IMR-90 (cell line): ENCODE measurements at regions of chr1 and their contacts with region 1.

Region 1: DNA sequence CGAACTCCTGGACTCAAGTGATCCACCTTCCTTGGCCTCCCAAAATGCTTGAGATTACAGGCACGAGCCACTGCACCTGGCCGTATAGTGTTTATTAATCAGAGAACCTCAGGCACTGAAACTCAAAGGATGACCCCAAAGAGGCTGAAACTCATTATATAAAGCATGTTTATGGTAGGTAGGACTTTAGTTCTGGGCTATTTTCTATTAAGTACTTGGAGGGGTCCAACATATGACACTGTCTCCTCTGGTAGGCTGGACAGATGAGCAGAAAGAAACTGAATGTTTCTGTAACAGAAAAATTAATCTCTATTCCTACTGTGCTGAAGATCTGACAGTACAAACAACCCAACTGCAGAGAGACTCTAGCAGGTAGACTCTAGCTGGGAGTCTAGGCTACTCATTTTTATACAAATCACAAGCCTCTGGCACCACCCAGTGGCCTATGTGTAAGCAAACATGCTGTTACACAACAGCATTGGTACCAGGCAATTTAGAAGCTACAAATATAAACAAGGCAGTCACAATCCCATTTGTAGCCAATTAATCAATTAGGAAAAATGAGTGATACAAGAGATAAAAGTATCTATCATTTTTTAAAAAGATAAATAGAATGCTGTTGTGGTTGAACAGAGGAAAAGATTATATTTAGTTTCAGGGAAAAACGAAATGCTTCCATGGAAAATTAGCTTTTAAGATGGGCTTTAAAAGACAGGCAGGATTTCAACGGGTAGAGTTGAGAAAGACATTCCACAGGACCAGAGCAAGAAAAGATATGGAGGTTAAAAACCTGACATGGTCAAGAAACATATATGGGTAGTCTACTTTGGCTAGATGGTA is 10.4 kb downstream of the DCAF8 start:
- DNase-seq: peak; percentile 77
- ATAC-seq: peak; percentile 85
- H3K4me3 ChIP-seq: no peak overlapping the region
- H3K27ac ChIP-seq: no peak overlapping the region
- H3K4me1 ChIP-seq: no peaks in the 10 kb centered on the region
- H3K27me3 ChIP-seq: no peaks in the 10 kb centered on the region
- CTCF ChIP-seq: peak; percentile 72
- POLR2A ChIP-seq: no peak
- RAD21 ChIP-seq: peak; percentile 83

Region 2: DNA sequence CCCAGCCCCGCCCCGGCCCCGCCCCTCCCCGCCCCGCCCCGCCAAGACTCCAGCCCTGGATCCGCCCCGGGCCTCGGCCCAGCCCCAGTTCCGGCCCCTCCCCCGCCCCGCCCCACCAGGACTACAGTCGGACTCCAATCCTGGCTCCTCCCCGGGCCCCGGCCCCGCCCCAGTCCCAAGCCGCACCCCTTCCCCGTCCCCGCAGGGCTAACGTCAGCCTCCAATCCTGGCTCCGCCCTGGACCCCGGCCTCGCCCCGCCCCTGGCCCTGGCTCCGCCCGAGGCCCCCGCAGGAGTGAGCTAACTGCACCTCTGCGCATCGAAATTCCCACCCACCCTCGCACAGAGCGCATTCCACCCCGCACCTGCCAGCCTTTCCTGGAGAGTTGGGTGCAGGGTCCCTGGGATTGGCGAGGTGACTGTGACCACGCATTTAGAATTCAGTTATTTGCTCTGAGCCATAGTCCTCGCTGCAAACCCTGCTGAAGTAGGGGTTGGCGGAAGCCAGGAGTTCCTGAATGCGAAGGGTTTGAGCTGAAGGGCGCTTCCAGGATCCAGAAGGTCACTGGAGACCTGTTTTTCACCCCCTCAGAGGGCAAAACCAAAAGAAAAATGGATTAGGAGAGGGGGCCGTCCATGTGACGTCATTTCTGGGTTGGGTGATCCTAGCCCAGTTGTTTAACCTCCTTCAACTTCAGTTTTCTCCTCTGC is 152.9 kb before region 1 on chr1:
- CTCF ChIA-PET with region 1: interaction called, 25 read pairs
- POLR2A ChIA-PET with region 1: no interaction called
- dilution Hi-C with region 1: no loop called
- in situ Hi-C with region 1: no loop called
- intact Hi-C with region 1: no loop called
- DNase-seq: peak; percentile 87
- ATAC-seq: peak; percentile 95
- H3K4me3 ChIP-seq: peak overlapping the region; percentile 64
- H3K27ac ChIP-seq: 0 out of 2 replicates have a peak overlapping the region, but pooled peaks have one; percentile 7
- H3K4me1 ChIP-seq: peaks cover 16% of the 10 kb centered on the region
- H3K27me3 ChIP-seq: no peaks in the 10 kb centered on the region; the same call in 1 of the 2 replicates
- CTCF ChIP-seq: no peak
- POLR2A ChIP-seq: no peak
- RAD21 ChIP-seq: no peak

Region 3: DNA sequence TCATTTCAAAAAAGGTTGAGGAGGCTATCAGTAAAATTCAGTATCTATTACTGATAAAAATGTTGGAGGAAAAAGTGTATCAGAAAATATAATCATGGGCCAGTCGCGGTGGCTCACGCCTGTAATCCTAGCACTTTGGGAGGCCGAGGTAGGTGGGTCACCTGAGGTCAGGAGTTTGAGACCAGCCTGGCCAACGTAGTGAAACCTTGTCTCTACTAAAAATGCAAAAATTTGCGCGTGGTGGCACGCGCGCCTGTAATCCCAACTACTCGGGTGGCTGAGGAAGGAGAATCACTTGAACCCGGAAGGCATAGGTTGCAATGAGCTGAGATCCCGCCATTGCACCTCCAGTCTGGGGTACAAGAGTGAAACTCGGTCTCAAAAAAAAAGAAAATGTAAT is 105.8 kb before region 1 on chr1:
- CTCF ChIA-PET with region 1: no interaction called
- POLR2A ChIA-PET with region 1: interaction called, 12 read pairs
- dilution Hi-C with region 1: no loop called
- in situ Hi-C with region 1: no loop called
- intact Hi-C with region 1: no loop called
- DNase-seq: no peak
- ATAC-seq: no peak
- H3K4me3 ChIP-seq: no peak overlapping the region
- H3K27ac ChIP-seq: no peak overlapping the region
- H3K4me1 ChIP-seq: no peaks in the 10 kb centered on the region
- H3K27me3 ChIP-seq: peaks cover 18% of the 10 kb centered on the region
- CTCF ChIP-seq: no peak
- POLR2A ChIP-seq: no peak
- RAD21 ChIP-seq: no peak

Region 4: DNA sequence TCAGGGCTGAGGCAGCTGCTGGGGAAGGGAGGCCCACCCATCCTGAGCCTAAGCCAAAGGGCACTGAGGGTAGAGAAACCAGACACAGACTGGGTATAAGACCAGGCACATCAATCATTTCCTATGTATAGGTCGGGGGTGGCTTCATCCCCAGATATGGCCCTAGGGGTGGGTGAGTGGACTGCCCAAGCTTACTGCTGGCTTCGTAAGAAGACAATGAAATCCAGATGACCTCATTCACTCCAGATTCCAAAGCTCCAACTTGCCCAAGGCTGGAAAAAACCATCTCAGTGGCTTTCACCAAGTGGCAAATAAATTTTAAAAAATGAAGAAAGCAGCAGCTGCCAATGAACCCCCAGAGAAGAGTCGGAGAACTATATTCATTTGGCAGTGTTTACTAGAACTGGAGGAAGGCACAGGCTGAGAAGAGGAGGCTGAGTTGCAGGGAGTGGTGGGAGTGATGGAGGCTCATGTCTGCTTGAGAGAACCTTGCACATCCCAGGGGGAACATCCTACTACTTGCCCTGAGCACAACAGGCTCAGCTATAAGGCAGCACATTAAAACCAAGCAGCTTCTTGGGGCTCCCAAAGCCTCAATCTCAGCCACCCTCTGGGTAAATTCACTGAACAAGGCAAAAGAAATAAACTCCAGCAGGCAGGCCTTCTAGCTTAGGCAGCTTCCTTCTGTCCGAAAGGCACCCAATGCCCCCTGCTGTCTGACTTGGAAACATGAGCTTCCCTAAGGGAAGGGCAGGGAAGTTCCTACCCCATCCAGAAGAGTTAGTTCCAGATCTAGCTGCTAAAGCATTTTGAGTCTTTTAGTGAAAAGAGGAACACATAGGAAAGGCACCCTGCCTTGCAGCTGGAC is 32.6 kb before region 1 on chr1:
- CTCF ChIA-PET with region 1: interaction called, 15 read pairs
- POLR2A ChIA-PET with region 1: no interaction called
- dilution Hi-C with region 1: no loop called
- in situ Hi-C with region 1: no loop called
- intact Hi-C with region 1: no loop called
- DNase-seq: peak; percentile 80
- ATAC-seq: peak; percentile 79
- H3K4me3 ChIP-seq: no peak overlapping the region
- H3K27ac ChIP-seq: peak overlapping the region; percentile 53; the same call in 1 of the 2 replicates
- H3K4me1 ChIP-seq: peaks cover 21% of the 10 kb centered on the region
- H3K27me3 ChIP-seq: no peaks in the 10 kb centered on the region
- CTCF ChIP-seq: peak; percentile 79
- POLR2A ChIP-seq: no peak
- RAD21 ChIP-seq: peak; percentile 79

Region 5: DNA sequence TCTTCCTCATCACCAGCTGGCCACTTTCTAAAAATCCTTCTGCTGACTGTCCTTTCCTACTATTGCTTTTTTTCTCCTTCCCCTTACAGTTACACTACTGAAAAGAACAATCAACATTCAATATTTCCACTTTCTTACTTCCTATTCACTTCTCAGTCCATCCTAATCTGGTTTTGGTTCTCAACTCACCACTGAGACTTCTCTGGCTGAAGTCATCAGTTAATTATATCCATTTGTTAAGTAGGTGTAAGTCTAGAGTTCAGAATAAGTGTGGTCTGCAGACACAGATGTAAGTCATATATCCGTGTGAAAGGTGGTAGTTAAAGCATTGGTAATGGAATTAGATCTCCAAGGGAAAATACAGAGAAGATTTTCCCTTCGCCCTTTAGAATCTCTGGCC is 25.3 kb before region 1 on chr1:
- CTCF ChIA-PET with region 1: interaction called, 12 read pairs
- POLR2A ChIA-PET with region 1: no interaction called
- dilution Hi-C with region 1: no loop called
- in situ Hi-C with region 1: no loop called
- intact Hi-C with region 1: no loop called
- DNase-seq: no peak
- ATAC-seq: no peak
- H3K4me3 ChIP-seq: no peak overlapping the region
- H3K27ac ChIP-seq: no peak overlapping the region
- H3K4me1 ChIP-seq: no peaks in the 10 kb centered on the region
- H3K27me3 ChIP-seq: no peaks in the 10 kb centered on the region
- CTCF ChIP-seq: no peak
- POLR2A ChIP-seq: no peak
- RAD21 ChIP-seq: no peak

Region 6: DNA sequence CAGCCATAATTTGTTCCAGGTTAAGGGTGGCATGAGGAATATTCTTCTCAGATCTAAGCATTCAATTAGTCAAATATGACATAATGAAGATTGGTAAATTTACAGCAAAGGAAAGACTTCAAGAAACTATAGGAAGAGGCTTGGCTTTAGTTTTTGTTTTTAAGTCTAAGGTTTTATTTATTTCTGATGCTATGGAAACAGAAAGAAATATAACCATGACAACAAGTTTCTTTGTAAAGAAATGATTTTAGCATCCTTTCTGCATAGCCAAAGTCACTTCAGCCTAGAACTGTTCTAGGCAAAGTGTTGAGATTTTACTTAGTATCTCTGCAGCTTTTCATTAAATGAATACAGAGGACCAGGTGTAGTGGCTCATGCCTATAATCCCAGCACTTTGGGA is 19.0 kb before region 1 on chr1:
- CTCF ChIA-PET with region 1: interaction called, 12 read pairs
- POLR2A ChIA-PET with region 1: no interaction called
- dilution Hi-C with region 1: no loop called
- in situ Hi-C with region 1: no loop called
- intact Hi-C with region 1: no loop called
- DNase-seq: no peak
- ATAC-seq: no peak
- H3K4me3 ChIP-seq: no peak overlapping the region
- H3K27ac ChIP-seq: no peak overlapping the region
- H3K4me1 ChIP-seq: no peaks in the 10 kb centered on the region
- H3K27me3 ChIP-seq: no peaks in the 10 kb centered on the region
- CTCF ChIP-seq: no peak
- POLR2A ChIP-seq: no peak
- RAD21 ChIP-seq: no peak

Region 7: DNA sequence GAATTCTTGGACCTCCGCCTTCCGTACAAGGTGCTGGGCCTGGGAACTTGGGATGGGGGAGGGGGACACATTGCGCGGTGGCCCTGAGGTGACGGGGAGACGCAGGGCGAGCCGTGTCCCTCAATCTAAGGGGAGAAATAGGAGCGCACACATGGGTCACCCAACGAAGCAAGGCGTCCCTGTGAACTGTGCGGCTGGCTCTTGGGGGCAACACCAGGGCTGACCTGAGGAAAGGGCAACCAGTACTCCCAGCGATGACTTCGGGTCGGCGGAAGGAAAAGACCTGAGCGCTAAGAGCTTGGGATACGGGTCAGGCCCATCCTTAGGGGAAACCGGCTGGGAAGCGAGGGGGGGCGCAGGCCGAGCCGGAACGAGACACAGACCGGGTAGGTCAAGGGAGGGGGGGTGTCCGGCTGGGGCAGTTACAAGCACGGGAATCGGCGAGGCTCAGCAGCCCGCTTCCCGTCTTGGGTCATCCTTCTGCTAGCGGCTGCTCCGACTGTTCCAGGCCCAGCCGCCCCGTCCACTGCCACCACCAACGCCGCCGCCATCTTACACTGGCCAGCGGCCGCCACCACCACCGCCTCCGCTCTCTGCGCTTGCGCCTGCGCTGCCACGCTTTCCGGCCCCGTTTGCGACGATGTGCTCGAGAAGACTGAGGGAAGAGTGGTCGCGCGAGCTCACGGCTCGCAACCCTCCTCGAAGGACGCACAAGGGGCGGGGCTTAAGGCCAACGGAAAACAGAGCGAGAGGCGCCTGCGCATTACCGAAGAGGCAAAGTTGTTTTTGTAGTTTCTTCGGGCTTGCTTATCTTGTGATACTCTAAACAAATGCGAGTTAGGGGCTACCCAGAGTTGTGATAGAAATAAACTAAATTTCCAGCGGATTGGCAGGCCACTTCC is 10.2 kb after region 1 on chr1 and contains the start of gene DCAF8:
- CTCF ChIA-PET with region 1: interaction called, 26 read pairs
- POLR2A ChIA-PET with region 1: interaction called, 4 read pairs
- dilution Hi-C with region 1: no loop called
- in situ Hi-C with region 1: no loop called
- intact Hi-C with region 1: no loop called
- DNase-seq: peak; percentile 97
- ATAC-seq: peak; percentile 97
- H3K4me3 ChIP-seq: peak within 1 kb of the TSS; percentile 71
- H3K27ac ChIP-seq: peak within 1 kb of the TSS; percentile 91
- H3K4me1 ChIP-seq: peaks cover 2% of the 10 kb centered on the region; the same call in 1 of the 2 replicates
- H3K27me3 ChIP-seq: no peaks in the 10 kb centered on the region
- CTCF ChIP-seq: 0 out of 2 replicates have a peak, but pooled peaks have one; percentile 1
- POLR2A ChIP-seq: peak; percentile 97
- RAD21 ChIP-seq: no peak
- total RNA-seq, gene DCAF8: 83.3 TPM in 2 replicates

Region 8: GRCh38 chr1:160474392-160475242 is 222.7 kb after region 1 on chr1:
- CTCF ChIA-PET with region 1: no interaction called
- POLR2A ChIA-PET with region 1: no interaction called
- dilution Hi-C with region 1: no loop called
- in situ Hi-C with region 1: no loop called
- intact Hi-C with region 1: no loop called
- DNase-seq: no peak
- ATAC-seq: no peak
- H3K4me3 ChIP-seq: no peak overlapping the region
- H3K27ac ChIP-seq: no peak overlapping the region
- H3K4me1 ChIP-seq: no peaks in the 10 kb centered on the region
- H3K27me3 ChIP-seq: no peaks in the 10 kb centered on the region
- CTCF ChIP-seq: no peak
- POLR2A ChIP-seq: no peak
- RAD21 ChIP-seq: no peak

Region 9: GRCh38 chr1:160575112-160575664 is 323.3 kb after region 1 on chr1:
- CTCF ChIA-PET with region 1: no interaction called
- POLR2A ChIA-PET with region 1: no interaction called
- dilution Hi-C with region 1: no loop called
- in situ Hi-C with region 1: no loop called
- intact Hi-C with region 1: no loop called
- DNase-seq: no peak
- ATAC-seq: no peak
- H3K4me3 ChIP-seq: no peak overlapping the region
- H3K27ac ChIP-seq: no peak overlapping the region
- H3K4me1 ChIP-seq: no peaks in the 10 kb centered on the region
- H3K27me3 ChIP-seq: no peaks in the 10 kb centered on the region
- CTCF ChIP-seq: no peak
- POLR2A ChIP-seq: no peak
- RAD21 ChIP-seq: no peak